H1 (cell line): ENCODE measurements at regions of chr9 and their contacts with region 1.

Region 1: GRCh38 chr9:21326526-21327139 is 8.6 kb downstream of the KLHL9 start:
- DNase-seq: no peak
- H3K4me3 ChIP-seq: no peak overlapping the region
- H3K27ac ChIP-seq: no peak overlapping the region
- H3K4me1 ChIP-seq: no peaks in the 10 kb centered on the region
- H3K27me3 ChIP-seq: no peaks in the 10 kb centered on the region
- CTCF ChIP-seq: peak in 2 of 3 experiments; percentile 53 to 62; a peak in 2 of 4 replicates
- EP300 ChIP-seq: no peak
- POLR2A ChIP-seq: no peak
- RAD21 ChIP-seq: peak; percentile 84 to 87

Region 2: DNA sequence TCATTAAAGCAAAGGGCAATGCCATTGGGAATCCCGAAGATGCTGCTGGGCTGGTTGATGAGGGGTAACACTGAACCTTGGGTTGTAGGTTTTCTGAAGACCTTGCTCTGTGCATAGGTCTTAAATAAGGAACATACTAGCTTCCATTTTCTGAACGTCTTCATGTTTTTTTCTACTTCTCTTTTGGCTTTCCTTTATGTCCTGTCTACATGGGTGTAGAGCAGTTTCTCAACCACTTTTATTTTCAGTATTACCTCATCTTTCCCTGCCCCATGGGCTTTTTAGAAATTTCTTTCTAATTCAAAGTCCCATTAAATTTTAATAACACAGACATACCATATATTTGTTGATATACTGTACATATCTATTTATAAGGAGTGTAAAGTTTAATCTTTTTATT is 86.7 kb before region 1 on chr9 and contains the start of gene IFNA14:
- CTCF ChIA-PET with region 1: interaction called, 11 read pairs
- POLR2A ChIA-PET with region 1: no interaction called
- DNase-seq: no peak
- H3K4me3 ChIP-seq: no peak within 1 kb of the TSS
- H3K27ac ChIP-seq: no peak within 1 kb of the TSS
- H3K4me1 ChIP-seq: no peaks in the 10 kb centered on the region
- H3K27me3 ChIP-seq: no peaks in the 10 kb centered on the region
- CTCF ChIP-seq: no peak
- EP300 ChIP-seq: no peak
- POLR2A ChIP-seq: no peak
- RAD21 ChIP-seq: no peak
- total RNA-seq, gene IFNA14: not detected in 2 replicates

Region 3: DNA sequence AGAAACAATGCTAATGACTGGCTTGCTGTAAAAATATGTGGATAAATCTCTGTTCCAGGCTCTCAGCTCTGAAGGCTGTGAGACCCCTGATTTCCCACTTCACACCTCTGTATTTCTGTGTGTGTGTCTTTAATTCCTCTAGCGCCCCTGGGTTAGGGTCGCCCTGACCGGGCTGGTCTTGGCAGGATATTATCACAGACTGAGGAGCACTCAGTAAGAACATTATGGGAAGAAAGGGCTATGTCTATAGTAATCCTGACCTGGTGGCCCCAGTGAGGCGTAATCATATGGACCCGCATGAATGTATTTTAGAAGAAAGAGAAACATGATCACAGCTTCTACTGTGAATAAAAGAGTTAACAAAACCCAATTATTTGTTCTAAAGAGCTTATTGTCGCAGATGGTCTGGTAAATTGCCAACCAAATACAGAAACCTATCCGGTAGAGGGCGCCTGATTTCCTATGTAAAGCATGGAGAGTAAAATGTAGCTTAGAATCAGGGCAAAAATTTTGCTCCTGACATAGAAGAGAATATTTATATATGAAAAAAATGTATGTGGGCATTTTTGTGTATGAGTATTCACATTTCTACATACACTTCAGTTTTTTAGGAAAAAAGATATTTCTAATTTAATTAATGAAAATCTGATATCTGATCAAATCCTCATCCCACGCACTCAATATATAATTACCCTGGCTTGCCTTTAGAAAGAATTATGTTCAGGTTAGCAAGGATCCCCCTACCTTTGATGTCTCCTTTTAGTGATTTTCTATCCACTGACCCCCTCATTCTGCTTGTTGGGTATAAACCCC is 107.8 kb after region 1 on chr9:
- CTCF ChIA-PET with region 1: interaction called, 14 read pairs
- POLR2A ChIA-PET with region 1: no interaction called
- DNase-seq: peak in 1 of 2 experiments; percentile 66
- H3K4me3 ChIP-seq: no peak overlapping the region
- H3K27ac ChIP-seq: no peak overlapping the region
- H3K4me1 ChIP-seq: no peaks in the 10 kb centered on the region
- H3K27me3 ChIP-seq: no peaks in the 10 kb centered on the region
- CTCF ChIP-seq: peak in 2 of 3 experiments; percentile 47; a peak in 2 of 4 replicates
- EP300 ChIP-seq: no peak
- POLR2A ChIP-seq: no peak
- RAD21 ChIP-seq: peak; percentile 31 to 46; a peak in 3 of 4 replicates